Endothelial cell of umbilical vein (primary cell): ENCODE measurements at regions of chr5 and their contacts with region 1.

Region 1: DNA sequence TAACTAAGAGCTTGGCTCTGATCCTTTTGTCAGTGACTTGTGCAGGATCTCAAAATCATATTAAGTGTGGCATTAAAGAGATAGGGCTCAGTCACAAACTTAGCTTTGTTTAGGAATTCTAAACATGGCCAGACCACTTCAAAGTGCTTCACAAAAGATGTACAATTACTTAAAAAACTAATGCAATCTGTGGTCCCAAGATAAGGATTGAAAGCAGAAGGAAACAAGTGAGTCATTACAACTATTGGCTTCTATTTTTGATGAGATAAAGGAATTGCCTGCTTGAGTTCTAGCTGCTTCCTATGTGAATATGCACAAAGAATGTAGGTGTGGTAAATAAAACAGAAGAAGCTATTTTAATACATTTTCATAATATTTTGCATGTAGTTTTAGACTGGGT is 44.9 kb upstream of the SLC12A2 start:
- DNase-seq: peak; percentile 94
- H3K4me3 ChIP-seq: no peak overlapping the region
- H3K27ac ChIP-seq: peak overlapping the region; percentile 87
- H3K4me1 ChIP-seq: peaks cover 29% of the 10 kb centered on the region
- H3K27me3 ChIP-seq: no peaks in the 10 kb centered on the region
- CTCF ChIP-seq: no peak
- POLR2A ChIP-seq: peak; percentile 83

Region 2: GRCh38 chr5:127813633-127814587 is 224.7 kb before region 1 on chr5:
- CTCF ChIA-PET with region 1: no interaction called
- POLR2A ChIA-PET with region 1: no interaction called
- dilution Hi-C with region 1: no loop called
- intact Hi-C with region 1: loop called (anchors 5 kb)
- DNase-seq: peak; percentile 83
- H3K4me3 ChIP-seq: no peak overlapping the region
- H3K27ac ChIP-seq: peak overlapping the region; percentile 76
- H3K4me1 ChIP-seq: peaks cover 23% of the 10 kb centered on the region
- H3K27me3 ChIP-seq: no peaks in the 10 kb centered on the region
- CTCF ChIP-seq: no peak
- POLR2A ChIP-seq: no peak

Region 3: GRCh38 chr5:127867389-127867788 is 171.3 kb before region 1 on chr5:
- CTCF ChIA-PET with region 1: interaction called, 3 read pairs
- POLR2A ChIA-PET with region 1: no interaction called
- dilution Hi-C with region 1: no loop called
- intact Hi-C with region 1: loop called (anchors 1 kb)
- DNase-seq: no peak
- H3K4me3 ChIP-seq: no peak overlapping the region
- H3K27ac ChIP-seq: no peak overlapping the region
- H3K4me1 ChIP-seq: peaks cover 36% of the 10 kb centered on the region
- H3K27me3 ChIP-seq: peaks cover 0 to 7% of the 10 kb centered on the region in 2 experiments
- CTCF ChIP-seq: no peak
- POLR2A ChIP-seq: no peak

Region 4: DNA sequence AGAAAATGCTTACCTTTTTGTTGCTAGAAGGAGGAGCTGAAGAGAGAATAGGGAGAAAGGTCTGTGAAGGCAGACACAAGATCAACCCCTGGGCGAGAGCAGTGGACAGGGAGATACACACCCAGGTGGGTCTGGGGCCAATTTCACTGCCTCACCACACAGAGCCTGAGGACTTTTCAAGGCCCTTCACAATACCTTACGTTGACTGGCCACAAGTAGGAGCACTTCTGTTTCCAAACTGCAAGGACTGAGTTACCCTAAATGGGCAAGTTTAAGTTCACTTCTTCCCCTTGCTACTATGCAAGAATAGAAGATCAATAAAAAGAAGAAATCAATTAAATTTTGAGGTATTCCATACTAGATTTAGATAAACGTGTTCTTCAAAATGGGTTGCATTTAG is 129.6 kb before region 1 on chr5:
- CTCF ChIA-PET with region 1: interaction called, 14 read pairs
- POLR2A ChIA-PET with region 1: no interaction called
- dilution Hi-C with region 1: no loop called
- intact Hi-C with region 1: loop called (anchors 1 kb)
- DNase-seq: peak; percentile 68
- H3K4me3 ChIP-seq: no peak overlapping the region
- H3K27ac ChIP-seq: no peak overlapping the region
- H3K4me1 ChIP-seq: peaks cover 15% of the 10 kb centered on the region
- H3K27me3 ChIP-seq: no peaks in the 10 kb centered on the region
- CTCF ChIP-seq: peak; percentile 56 to 62
- POLR2A ChIP-seq: no peak

Region 5: GRCh38 chr5:127988146-127988760 is 50.4 kb before region 1 on chr5:
- CTCF ChIA-PET with region 1: interaction called, 7 read pairs
- POLR2A ChIA-PET with region 1: interaction called, 6 read pairs
- dilution Hi-C with region 1: no loop called
- intact Hi-C with region 1: loop called (anchors 1 kb)
- DNase-seq: peak; percentile 92
- H3K4me3 ChIP-seq: no peak overlapping the region
- H3K27ac ChIP-seq: peak overlapping the region; percentile 65
- H3K4me1 ChIP-seq: peaks cover 13% of the 10 kb centered on the region
- H3K27me3 ChIP-seq: no peaks in the 10 kb centered on the region
- CTCF ChIP-seq: no peak
- POLR2A ChIP-seq: no peak

Region 6: DNA sequence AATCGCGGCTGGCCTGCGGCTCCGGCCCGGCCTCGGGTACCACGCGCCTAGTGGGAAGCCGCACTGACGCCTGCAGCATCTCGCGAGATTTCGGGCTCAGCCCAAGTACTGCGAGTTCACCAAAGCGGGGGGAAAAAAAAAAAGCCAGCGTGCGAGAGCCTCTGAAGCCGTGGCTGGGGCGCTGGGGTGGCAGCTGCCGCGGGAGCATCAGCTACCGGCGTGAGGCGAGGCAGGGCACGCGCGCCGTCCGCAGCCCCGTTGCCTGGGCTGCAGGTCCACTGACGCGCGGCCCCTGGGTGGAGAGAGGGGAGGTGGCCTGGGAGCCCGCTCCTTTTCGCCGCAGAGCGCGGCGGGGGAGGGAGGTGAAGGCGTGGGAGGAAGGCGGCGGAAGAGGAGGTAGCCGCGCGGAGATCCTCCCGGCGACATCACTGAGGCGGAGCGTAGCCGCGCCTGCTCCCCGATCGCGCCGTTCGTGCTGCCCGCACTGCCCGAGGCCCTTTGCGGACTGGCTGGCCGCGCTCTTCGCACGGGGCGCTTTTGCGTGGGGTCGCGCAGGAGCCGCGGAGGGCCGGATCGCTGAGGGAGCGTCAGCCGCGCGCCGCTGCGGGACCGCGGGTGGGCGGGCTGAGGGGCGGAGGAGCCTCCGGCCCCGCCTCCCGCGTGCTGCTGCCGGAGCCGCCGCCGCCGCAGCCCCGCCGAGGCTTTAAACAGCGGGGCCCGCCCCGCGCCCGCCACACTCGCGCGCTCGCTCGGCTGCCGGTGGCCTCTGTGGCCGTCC is 44.6 kb after region 1 on chr5 and contains the start of gene SLC12A2:
- CTCF ChIA-PET with region 1: interaction called, 11 read pairs
- POLR2A ChIA-PET with region 1: interaction called, 6 read pairs
- dilution Hi-C with region 1: no loop called
- intact Hi-C with region 1: loop called (anchors 1 kb)
- DNase-seq: peak; percentile 93
- H3K4me3 ChIP-seq: peak within 1 kb of the TSS; percentile 32 to 94 (median 85)
- H3K27ac ChIP-seq: peak within 1 kb of the TSS; percentile 76
- H3K4me1 ChIP-seq: peaks cover 25% of the 10 kb centered on the region
- H3K27me3 ChIP-seq: no peaks in the 10 kb centered on the region
- CTCF ChIP-seq: no peak
- POLR2A ChIP-seq: peak; percentile 89
- total RNA-seq, gene SLC12A2: 41.7 and 59.5 TPM in 2 replicates